ENCODE measurements at regions of chr9 and their contacts with region 1.

Region 1: GRCh38 chr9:89919169-89919681 is 314.4 kb downstream of the GADD45G start:
- DNase-seq: peak; percentile 49 to 86
- H3K4me3 ChIP-seq: no peak overlapping the region
- H3K27ac ChIP-seq: no peak overlapping the region
- H3K4me1 ChIP-seq: peaks cover 0 to 4% (median 0%) of the 10 kb centered on the region in 4 experiments; a peak in 1 of 7 replicates
- H3K27me3 ChIP-seq: no peaks in the 10 kb centered on the region; a peak in 1 of 7 replicates
- CTCF ChIP-seq: peak; percentile 55 to 83 (median 77)
- EP300 ChIP-seq: no peak
- POLR2A ChIP-seq: no peak
- RAD21 ChIP-seq: peak; percentile 48 to 60

Region 2: GRCh38 chr9:89929673-89930480 is 10.7 kb after region 1 on chr9:
- CTCF ChIA-PET with region 1: interaction called, 15 read pairs
- POLR2A ChIA-PET with region 1: no interaction called
- DNase-seq: no peak
- H3K4me3 ChIP-seq: no peak overlapping the region
- H3K27ac ChIP-seq: no peak overlapping the region; the same call in 1 of the 2 replicates
- H3K4me1 ChIP-seq: no peaks in the 10 kb centered on the region
- H3K27me3 ChIP-seq: no peaks in the 10 kb centered on the region; a peak in 1 of 7 replicates
- CTCF ChIP-seq: no peak
- EP300 ChIP-seq: no peak
- POLR2A ChIP-seq: no peak
- RAD21 ChIP-seq: no peak

Region 3: GRCh38 chr9:89935115-89935514 is 15.9 kb after region 1 on chr9:
- CTCF ChIA-PET with region 1: interaction called, 12 read pairs
- POLR2A ChIA-PET with region 1: no interaction called
- DNase-seq: no peak
- H3K4me3 ChIP-seq: no peak overlapping the region
- H3K27ac ChIP-seq: no peak overlapping the region
- H3K4me1 ChIP-seq: no peaks in the 10 kb centered on the region
- H3K27me3 ChIP-seq: no peaks in the 10 kb centered on the region; a peak in 1 of 7 replicates
- CTCF ChIP-seq: no peak
- EP300 ChIP-seq: no peak
- POLR2A ChIP-seq: no peak
- RAD21 ChIP-seq: no peak

Region 4: GRCh38 chr9:90095682-90096081 is 176.5 kb after region 1 on chr9:
- CTCF ChIA-PET with region 1: interaction called, 15 read pairs
- POLR2A ChIA-PET with region 1: no interaction called
- DNase-seq: no peak
- H3K4me3 ChIP-seq: no peak overlapping the region
- H3K27ac ChIP-seq: no peak overlapping the region
- H3K4me1 ChIP-seq: peaks cover 0 to 3% (median 0%) of the 10 kb centered on the region in 4 experiments; a peak in 1 of 7 replicates
- H3K27me3 ChIP-seq: no peaks in the 10 kb centered on the region; a peak in 1 of 7 replicates
- CTCF ChIP-seq: no peak
- EP300 ChIP-seq: no peak
- POLR2A ChIP-seq: no peak
- RAD21 ChIP-seq: no peak

Region 5: GRCh38 chr9:90102292-90102901 is 183.2 kb after region 1 on chr9:
- CTCF ChIA-PET with region 1: interaction called, 15 read pairs
- POLR2A ChIA-PET with region 1: no interaction called
- DNase-seq: peak; percentile 53 to 70
- H3K4me3 ChIP-seq: no peak overlapping the region
- H3K27ac ChIP-seq: no peak overlapping the region
- H3K4me1 ChIP-seq: no peaks in the 10 kb centered on the region
- H3K27me3 ChIP-seq: no peaks in the 10 kb centered on the region; a peak in 2 of 7 replicates
- CTCF ChIP-seq: peak; percentile 76 to 92 (median 86)
- EP300 ChIP-seq: no peak
- POLR2A ChIP-seq: no peak
- RAD21 ChIP-seq: peak; percentile 97 to 98

Measured in H1 (cell line).